ENCODE measurements at regions of chr5 and their contacts with region 1.

Region 1: DNA sequence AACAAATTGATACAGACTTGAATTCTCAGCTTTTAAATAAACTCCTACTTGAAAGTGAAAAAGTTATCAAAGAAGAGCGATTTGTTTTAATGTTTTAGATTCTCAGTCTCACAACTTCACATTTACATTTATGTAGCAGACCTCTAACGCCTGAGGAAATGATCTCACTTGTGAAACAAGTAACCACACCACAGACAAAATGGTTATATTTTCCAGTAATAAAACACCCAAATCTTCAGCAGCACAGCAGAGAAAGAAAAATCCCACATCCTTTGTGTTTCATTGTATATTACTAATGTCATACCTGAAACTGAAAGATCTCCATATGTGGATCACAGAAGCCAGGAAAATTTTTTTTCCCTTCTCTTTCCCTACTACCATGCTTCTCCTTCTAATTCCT is 29.8 kb upstream of the GZMA start:
- DNase-seq: no peak

Region 2: DNA sequence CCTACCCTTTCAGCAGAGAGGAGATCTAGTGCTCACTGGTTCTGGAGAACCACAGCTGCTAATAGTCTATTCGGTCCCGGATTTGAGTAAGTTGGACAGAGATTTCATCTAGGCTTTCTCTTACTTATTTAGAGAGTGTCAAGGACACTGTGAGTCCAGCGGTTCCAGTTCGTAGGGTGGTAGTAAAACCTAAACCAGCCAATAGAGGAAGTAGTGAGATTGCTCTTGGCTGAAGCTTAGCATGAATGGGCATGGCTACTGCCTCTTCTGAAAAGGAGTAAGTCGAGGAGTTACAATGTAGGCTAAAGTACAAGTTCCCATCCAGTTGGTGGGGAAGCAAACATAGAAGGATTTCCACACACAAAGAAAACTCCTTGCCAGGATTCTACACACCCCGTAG is 1853.5 kb before region 1 on chr5:
- intact Hi-C with region 1: loop called in 1 of 2 experiments (anchors 5 kb)
- DNase-seq: no peak